ENCODE measurements at regions of chr19 and their contacts with region 1.

Region 1: GRCh38 chr19:5128251-5128935 is 159.5 kb downstream of the KDM4B start:
- DNase-seq: no peak
- H3K4me3 ChIP-seq: no peak overlapping the region
- H3K27ac ChIP-seq: no peak overlapping the region
- H3K4me1 ChIP-seq: peaks cover 5 to 57% (median 48%) of the 10 kb centered on the region in 4 experiments
- H3K27me3 ChIP-seq: no peaks in the 10 kb centered on the region
- CTCF ChIP-seq: no peak
- EP300 ChIP-seq: no peak
- POLR2A ChIP-seq: no peak
- RAD21 ChIP-seq: no peak

Region 2: GRCh38 chr19:5112681-5113557 is 15.5 kb before region 1 on chr19:
- CTCF ChIA-PET with region 1: interaction called, 11 read pairs
- POLR2A ChIA-PET with region 1: interaction called, 5 read pairs
- DNase-seq: no peak
- H3K4me3 ChIP-seq: no peak overlapping the region
- H3K27ac ChIP-seq: no peak overlapping the region; the same call in 1 of the 2 replicates
- H3K4me1 ChIP-seq: peaks cover 0 to 40% (median 26%) of the 10 kb centered on the region in 4 experiments; a peak in 6 of 7 replicates
- H3K27me3 ChIP-seq: no peaks in the 10 kb centered on the region
- CTCF ChIP-seq: no peak
- EP300 ChIP-seq: no peak
- POLR2A ChIP-seq: no peak
- RAD21 ChIP-seq: no peak

Measured in H1 (cell line).